Left lung (tissue), 14 donors: ENCODE measurements at regions of chr7 and their contacts with region 1.

Region 1: GRCh38 chr7:98400542-98401340 is at the start of gene BAIAP2L1:
- DNase-seq: peak; percentile 59 to 95 (median 88)
- ATAC-seq: peak; percentile 98
- H3K4me3 ChIP-seq: peak within 1 kb of the TSS; percentile 59 to 61
- H3K27ac ChIP-seq: peak within 1 kb of the TSS; percentile 73 to 75
- H3K4me1 ChIP-seq: peaks cover 0 to 12% of the 10 kb centered on the region in 2 donors
- H3K27me3 ChIP-seq: peaks cover 0 to 40% of the 10 kb centered on the region in 2 donors
- CTCF ChIP-seq: no peak
- polyA plus RNA-seq, gene BAIAP2L1: 16.6 to 23.8 (median 20.6) TPM

Region 2: DNA sequence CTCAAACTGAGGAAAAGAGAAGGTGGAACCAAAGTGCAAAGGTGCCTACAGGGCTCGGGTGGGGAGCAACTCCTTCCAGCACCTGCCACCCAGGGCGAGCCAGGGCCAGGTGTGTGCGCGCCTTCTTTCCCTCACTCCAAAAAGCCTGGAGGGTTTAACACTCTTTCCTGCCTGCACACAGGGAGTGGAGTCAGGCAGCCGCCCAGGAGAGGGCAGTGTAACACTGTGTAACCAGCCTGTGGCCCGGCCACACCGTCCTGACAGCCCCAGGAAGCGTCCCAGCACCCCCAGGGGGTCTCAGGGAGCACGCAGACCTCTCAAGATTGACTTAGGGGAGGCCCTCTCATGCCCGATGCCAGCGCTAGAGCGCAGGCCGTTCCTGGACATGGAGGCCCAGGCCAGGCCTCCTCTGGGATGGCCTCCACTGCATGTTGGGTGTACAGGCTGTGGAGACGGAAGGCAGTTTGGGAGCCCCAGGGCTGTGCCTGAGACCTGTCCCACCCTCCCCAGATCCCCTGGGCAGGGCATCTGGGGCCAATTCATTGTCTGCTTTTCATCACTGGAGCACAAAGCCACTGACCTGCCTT is 105.9 kb before region 1 on chr7:
- intact Hi-C with region 1: loop called in 1 of 2 experiments (anchors 10 kb)
- DNase-seq: peak in 2 of 4 donors; percentile 54 to 86
- ATAC-seq: peak; percentile 84
- H3K4me3 ChIP-seq: no peak overlapping the region
- H3K27ac ChIP-seq: peak overlapping the region in 1 of 2 donors; percentile 14
- H3K4me1 ChIP-seq: peaks cover 0 to 14% of the 10 kb centered on the region in 2 donors
- H3K27me3 ChIP-seq: no peaks in the 10 kb centered on the region
- CTCF ChIP-seq: peak; percentile 46 to 60

Region 3: GRCh38 chr7:98420966-98421612 is 20.3 kb after region 1 on chr7:
- intact Hi-C with region 1: no loop called
- DNase-seq: peak; percentile 16 to 91 (median 64)
- ATAC-seq: peak; percentile 90
- H3K4me3 ChIP-seq: no peak overlapping the region
- H3K27ac ChIP-seq: no peak overlapping the region
- H3K4me1 ChIP-seq: peaks cover 0 to 4% of the 10 kb centered on the region in 2 donors
- H3K27me3 ChIP-seq: no peaks in the 10 kb centered on the region
- CTCF ChIP-seq: peak; percentile 79 to 82

Region 4: DNA sequence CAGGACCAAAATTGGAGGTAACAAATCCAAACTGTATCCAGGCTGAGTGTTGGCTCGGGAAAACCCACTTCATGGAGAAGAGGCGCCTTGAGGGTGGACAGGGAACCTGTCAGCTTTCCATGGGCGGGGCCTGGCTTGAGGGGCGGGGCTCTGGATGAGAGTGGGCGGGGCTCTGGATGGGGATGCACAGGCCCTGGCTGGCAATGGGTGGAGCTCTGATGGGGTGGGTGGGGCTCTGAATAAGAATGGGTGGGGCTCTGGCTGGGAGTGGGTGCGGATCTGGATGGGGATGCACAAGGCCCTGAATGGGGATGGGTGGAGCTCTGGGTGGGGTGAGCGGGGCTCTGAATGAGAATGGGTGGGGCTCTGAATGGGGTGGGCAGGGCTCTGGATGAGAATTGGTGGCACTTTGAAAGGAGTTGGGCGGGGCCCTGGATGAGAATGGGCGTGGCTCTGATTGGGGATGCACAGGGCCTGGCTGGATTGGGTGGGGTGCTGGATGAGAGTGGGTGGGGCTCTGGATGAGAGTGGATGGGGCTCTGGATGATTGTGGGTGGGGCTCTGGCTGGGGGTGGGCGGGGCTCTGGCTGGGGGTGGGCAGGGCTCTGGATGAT is 119.7 kb after region 1 on chr7:
- intact Hi-C with region 1: no loop called
- DNase-seq: no peak
- ATAC-seq: no peak
- H3K4me3 ChIP-seq: no peak overlapping the region
- H3K27ac ChIP-seq: no peak overlapping the region
- H3K4me1 ChIP-seq: no peaks in the 10 kb centered on the region
- H3K27me3 ChIP-seq: no peaks in the 10 kb centered on the region
- CTCF ChIP-seq: no peak